ENCODE measurements at regions of chr15 and their contacts with region 1.

Region 1: DNA sequence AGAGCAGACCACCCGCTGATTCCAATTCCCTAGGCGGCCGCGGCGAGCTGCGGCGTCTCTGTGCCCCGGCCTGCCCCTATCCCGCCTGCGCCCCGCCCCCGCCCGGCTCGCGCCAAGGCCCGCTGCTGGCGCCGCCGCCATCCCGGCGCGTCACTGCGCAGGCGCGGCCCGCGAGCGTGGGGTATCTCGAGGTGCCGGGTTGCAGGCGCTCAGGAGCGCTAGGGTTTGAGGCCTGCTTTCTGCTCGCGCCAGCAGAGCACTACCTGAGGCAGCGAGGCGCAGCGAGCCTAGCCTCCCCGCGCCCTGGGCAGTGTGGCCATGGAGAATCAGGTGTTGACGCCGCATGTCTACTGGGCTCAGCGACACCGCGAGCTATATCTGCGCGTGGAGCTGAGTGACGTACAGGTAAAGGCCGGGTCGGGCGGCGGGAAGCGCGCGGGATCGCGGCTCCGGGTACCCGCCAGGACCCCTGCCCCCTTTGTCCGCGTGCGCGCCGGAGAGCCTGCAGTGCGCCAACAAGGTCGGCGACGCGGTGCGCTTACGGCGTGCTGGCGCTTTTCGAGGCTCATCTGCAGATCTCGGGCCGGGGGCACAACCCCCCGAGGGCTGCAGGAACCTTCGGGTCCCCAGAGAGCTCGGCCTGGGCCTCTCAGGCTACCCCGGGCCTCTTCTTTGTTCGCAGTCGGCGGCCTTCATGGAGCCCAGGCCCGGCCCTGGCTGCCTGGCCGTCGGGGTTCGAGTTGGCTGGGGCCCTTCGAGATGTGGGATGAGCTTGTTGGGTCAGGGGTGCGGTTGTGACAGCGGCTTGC is at the start of gene HACD3:
- DNase-seq: peak; percentile 21
- ATAC-seq: peak; percentile 96
- H3K4me3 ChIP-seq: peak within 1 kb of the TSS; percentile 94
- H3K27ac ChIP-seq: peak within 1 kb of the TSS; percentile 57
- H3K4me1 ChIP-seq: peaks cover 3% of the 10 kb centered on the region
- H3K27me3 ChIP-seq: no peaks in the 10 kb centered on the region
- CTCF ChIP-seq: no peak
- EP300 ChIP-seq: no peak
- POLR2A ChIP-seq: peak; percentile 90
- RAD21 ChIP-seq: no peak
- polyA plus RNA-seq, gene HACD3: 25.9 to 26.7 TPM

Region 2: GRCh38 chr15:65431731-65432130 is 98.8 kb before region 1 on chr15:
- CTCF ChIA-PET with region 1: no interaction called
- POLR2A ChIA-PET with region 1: no interaction called
- RAD21 ChIA-PET with region 1: no interaction called
- SMC1A ChIA-PET with region 1: no interaction called
- in situ Hi-C with region 1: no loop called
- intact Hi-C with region 1: no loop called
- DNase-seq: no peak
- ATAC-seq: no peak
- H3K4me3 ChIP-seq: no peak overlapping the region
- H3K27ac ChIP-seq: no peak overlapping the region
- H3K4me1 ChIP-seq: no peaks in the 10 kb centered on the region
- H3K27me3 ChIP-seq: no peaks in the 10 kb centered on the region; a peak in 1 of 4 replicates
- CTCF ChIP-seq: no peak
- EP300 ChIP-seq: no peak
- POLR2A ChIP-seq: no peak
- RAD21 ChIP-seq: no peak

Region 3: DNA sequence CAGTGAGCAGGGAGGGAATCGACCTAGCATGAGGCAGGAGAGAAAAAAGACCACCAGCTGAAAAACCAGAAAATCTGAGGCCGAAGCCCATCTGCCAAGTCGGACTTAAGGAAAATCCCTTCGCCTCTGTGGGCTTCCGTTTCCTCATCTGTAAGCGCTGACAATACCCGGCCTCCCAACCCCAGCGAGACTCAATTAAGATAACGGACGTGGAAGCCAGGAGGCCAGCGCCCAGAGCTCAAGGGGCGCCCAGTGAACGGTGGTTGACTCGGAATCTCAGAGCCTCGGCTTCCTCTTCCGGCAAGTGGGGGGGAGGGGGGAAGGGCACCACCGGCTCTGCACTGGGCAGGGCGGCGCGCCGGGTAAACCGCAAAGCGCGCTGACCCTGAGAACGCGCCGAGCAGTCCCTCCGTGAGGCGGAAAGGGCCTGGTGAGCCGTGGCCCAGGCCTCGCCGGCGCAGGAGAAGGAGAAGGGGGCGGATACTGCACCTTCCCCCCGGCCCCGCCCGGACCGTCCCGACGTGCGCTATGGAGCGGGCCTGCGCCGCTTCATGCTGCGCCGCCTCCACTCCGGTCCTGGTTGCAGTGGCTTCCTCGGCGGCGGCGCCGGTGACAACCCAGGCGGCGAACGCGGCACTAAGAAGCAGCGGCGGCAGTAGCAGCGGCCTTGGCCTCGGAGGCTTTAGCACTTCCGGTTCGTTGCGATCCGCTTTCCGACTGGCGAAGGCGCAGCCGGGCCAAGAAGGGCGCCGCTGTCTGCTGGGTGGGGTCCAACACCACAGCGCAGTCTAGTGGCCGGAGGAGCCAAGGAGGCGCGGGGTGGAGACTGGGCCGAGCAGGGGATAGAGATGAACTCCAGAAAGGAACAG is 13.3 kb before region 1 on chr15 and contains the start of gene DPP8:
- CTCF ChIA-PET with region 1: interaction called, 6 read pairs
- POLR2A ChIA-PET with region 1: interaction called, 13 read pairs
- RAD21 ChIA-PET with region 1: no interaction called
- SMC1A ChIA-PET with region 1: interaction called, 3 read pairs
- in situ Hi-C with region 1: no loop called
- intact Hi-C with region 1: no loop called
- DNase-seq: peak; percentile 69
- ATAC-seq: peak; percentile 96
- H3K4me3 ChIP-seq: peak within 1 kb of the TSS; percentile 88
- H3K27ac ChIP-seq: peak within 1 kb of the TSS; percentile 90
- H3K4me1 ChIP-seq: peaks cover 3% of the 10 kb centered on the region
- H3K27me3 ChIP-seq: no peaks in the 10 kb centered on the region
- CTCF ChIP-seq: peak; percentile 98 to 99 (median 98)
- EP300 ChIP-seq: no peak; a peak in 1 of 4 replicates
- POLR2A ChIP-seq: peak; percentile 97
- RAD21 ChIP-seq: 0 out of 2 replicates have a peak, but pooled peaks have one; percentile 4
- polyA plus RNA-seq, gene DPP8: 12.0 to 15.7 TPM

Measured in GM12878 (cell line).